ENCODE measurements at regions of chr13 and their contacts with region 1.

Region 1: DNA sequence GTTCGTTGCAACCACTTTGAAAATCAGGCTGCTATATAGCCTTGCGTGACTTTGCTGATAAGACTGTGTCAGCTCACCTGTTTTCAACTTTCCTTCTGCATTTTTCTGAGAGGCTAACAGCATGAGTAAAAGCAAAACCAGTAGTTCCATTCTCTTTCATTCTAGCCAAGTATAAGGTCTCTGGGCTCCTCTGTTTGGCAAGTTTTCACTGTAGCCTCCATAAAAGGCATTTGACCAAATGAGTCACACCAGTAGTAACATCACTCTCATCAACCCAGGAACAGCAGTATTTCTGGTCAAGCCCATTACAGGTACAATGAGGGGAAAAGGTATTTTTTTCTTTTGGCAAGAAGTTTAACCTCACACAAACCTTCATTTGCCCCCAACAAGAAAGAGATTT is 1149.8 kb upstream of the MIR17HG start:
- DNase-seq: no peak
- ATAC-seq: no peak
- H3K4me3 ChIP-seq: no peak overlapping the region
- H3K27ac ChIP-seq: no peak overlapping the region
- H3K4me1 ChIP-seq: peaks cover 0 to 14% (median 5%) of the 10 kb centered on the region in 9 donors
- H3K27me3 ChIP-seq: no peaks in the 10 kb centered on the region
- CTCF ChIP-seq: no peak

Region 2: DNA sequence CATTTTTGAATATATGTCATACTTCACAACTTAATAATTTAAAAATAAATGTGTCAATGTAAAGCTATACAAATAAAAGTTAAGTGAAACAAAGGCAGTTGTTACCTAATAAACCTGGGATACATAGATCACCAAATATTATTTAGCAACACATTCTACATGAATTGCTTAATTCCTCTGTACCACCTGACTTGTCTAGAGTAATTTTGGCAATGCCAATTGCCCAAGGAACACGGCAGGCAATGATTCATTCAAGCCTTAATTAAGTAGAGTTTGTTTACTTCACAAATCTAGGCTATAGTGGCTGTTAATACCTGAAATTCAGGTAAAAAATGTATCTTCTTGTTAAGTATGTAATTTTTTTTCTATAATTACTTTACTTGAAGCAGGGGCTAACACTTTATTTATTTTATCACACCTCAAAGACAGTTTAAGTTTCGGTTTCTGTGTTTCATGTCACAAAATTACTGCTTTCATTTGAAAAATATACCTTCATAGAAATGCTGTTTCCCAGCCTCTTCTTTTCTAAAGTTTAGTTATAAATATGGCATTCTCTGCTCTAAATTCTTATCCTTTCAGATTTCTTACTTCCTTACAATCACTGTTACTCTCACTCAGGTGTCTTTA is 1820.8 kb before region 1 on chr13:
- intact Hi-C with region 1: loop called in 1 of 10 experiments (anchors 10 kb)
- DNase-seq: no peak
- ATAC-seq: no peak
- H3K4me3 ChIP-seq: no peak overlapping the region
- H3K27ac ChIP-seq: no peak overlapping the region
- H3K4me1 ChIP-seq: no peaks in the 10 kb centered on the region
- H3K27me3 ChIP-seq: no peaks in the 10 kb centered on the region
- CTCF ChIP-seq: no peak

Region 3: DNA sequence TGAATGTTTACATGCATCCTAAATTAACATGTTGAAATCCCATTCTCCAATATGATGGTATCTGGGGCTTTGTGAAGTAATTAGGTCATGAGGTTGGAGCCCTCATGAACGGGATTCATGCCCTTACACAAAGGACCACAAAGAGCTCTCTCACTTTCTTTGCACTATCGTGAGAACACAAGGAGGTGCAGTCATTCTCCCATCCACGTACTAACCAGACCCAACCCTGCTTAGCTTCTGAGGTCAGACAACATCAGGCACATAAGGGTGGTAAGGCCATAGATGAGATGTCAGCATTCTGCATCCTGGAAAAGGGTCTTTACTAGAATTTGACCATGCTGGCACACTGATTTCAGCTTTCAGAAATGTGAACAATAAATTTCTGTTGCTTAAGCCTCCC is 62.2 kb before region 1 on chr13:
- intact Hi-C with region 1: no loop called
- DNase-seq: no peak
- ATAC-seq: no peak
- H3K4me3 ChIP-seq: no peak overlapping the region
- H3K27ac ChIP-seq: no peak overlapping the region
- H3K4me1 ChIP-seq: no peaks in the 10 kb centered on the region
- H3K27me3 ChIP-seq: no peaks in the 10 kb centered on the region
- CTCF ChIP-seq: no peak

Region 4: GRCh38 chr13:90477216-90477615 is 279.5 kb after region 1 on chr13:
- intact Hi-C with region 1: no loop called
- DNase-seq: no peak
- ATAC-seq: no peak
- H3K4me3 ChIP-seq: no peak overlapping the region
- H3K27ac ChIP-seq: no peak overlapping the region
- H3K4me1 ChIP-seq: peaks cover 0 to 4% (median 0%) of the 10 kb centered on the region in 9 donors
- H3K27me3 ChIP-seq: no peaks in the 10 kb centered on the region
- CTCF ChIP-seq: no peak

Measured in heart right ventricle (tissue), 16 donors.